ENCODE measurements at regions of chr18 and their contacts with region 1.

Region 1: GRCh38 chr18:47283476-47283875 is 32.0 kb upstream of the SKOR2 start:
- DNase-seq: peak in 1 of 14 experiments; percentile 4
- ATAC-seq: no peak
- H3K4me3 ChIP-seq: no peak overlapping the region
- H3K4me3 Mint-ChIP-seq: no peak overlapping the region
- H3K27ac ChIP-seq: no peak overlapping the region
- H3K27ac Mint-ChIP-seq: no peak overlapping the region
- H3K4me1 ChIP-seq: no peaks in the 10 kb centered on the region
- H3K4me1 Mint-ChIP-seq: no peaks in the 10 kb centered on the region
- H3K27me3 ChIP-seq: peaks cover 4 to 8% of the 10 kb centered on the region in 2 experiments
- H3K27me3 Mint-ChIP-seq: peaks cover 40% of the 10 kb centered on the region
- CTCF ChIP-seq: peak; percentile 16

Region 2: GRCh38 chr18:47100214-47100831 is 183.2 kb before region 1 on chr18:
- CTCF ChIA-PET with region 1: no interaction called
- POLR2A ChIA-PET with region 1: no interaction called
- intact Hi-C with region 1: loop called (anchors 1 to 2 kb)
- DNase-seq: peak; percentile 31 to 70 (median 50)
- ATAC-seq: peak; percentile 49
- H3K4me3 ChIP-seq: no peak overlapping the region
- H3K4me3 Mint-ChIP-seq: no peak overlapping the region
- H3K27ac ChIP-seq: no peak overlapping the region
- H3K27ac Mint-ChIP-seq: no peak overlapping the region
- H3K4me1 ChIP-seq: no peaks in the 10 kb centered on the region
- H3K4me1 Mint-ChIP-seq: no peaks in the 10 kb centered on the region
- H3K27me3 ChIP-seq: no peaks in the 10 kb centered on the region
- H3K27me3 Mint-ChIP-seq: no peaks in the 10 kb centered on the region
- CTCF ChIP-seq: peak; percentile 86

Measured in CD4-positive, alpha-beta T cell (primary cell).